ENCODE measurements at regions of chr1 and their contacts with region 1.

Region 1: GRCh38 chr1:199113265-199113869 is 474.5 kb downstream of the PTPRC start:
- DNase-seq: peak; percentile 85
- H3K4me3 ChIP-seq: no peak overlapping the region
- H3K27ac ChIP-seq: no peak overlapping the region
- H3K4me1 ChIP-seq: no peaks in the 10 kb centered on the region
- H3K27me3 ChIP-seq: no peaks in the 10 kb centered on the region
- CTCF ChIP-seq: peak; percentile 81 to 83
- POLR2A ChIP-seq: no peak

Region 2: DNA sequence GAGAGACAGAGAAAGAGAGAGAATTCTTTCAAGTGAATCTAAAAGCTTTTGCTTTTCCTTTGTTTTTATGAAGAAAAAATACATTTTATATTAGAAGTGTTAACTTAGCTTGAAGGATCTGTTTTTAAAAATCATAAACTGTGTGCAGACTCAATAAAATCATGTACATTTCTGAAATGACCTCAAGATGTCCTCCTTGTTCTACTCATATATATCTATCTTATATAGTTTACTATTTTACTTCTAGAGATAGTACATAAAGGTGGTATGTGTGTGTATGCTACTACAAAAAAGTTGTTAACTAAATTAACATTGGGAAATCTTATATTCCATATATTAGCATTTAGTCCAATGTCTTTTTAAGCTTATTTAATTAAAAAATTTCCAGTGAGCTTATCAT is 356.9 kb before region 1 on chr1:
- CTCF ChIA-PET with region 1: interaction called, 25 read pairs
- POLR2A ChIA-PET with region 1: no interaction called
- dilution Hi-C with region 1: no loop called
- intact Hi-C with region 1: no loop called
- DNase-seq: peak; percentile 27
- H3K4me3 ChIP-seq: no peak overlapping the region
- H3K27ac ChIP-seq: no peak overlapping the region
- H3K4me1 ChIP-seq: no peaks in the 10 kb centered on the region
- H3K27me3 ChIP-seq: no peaks in the 10 kb centered on the region
- CTCF ChIP-seq: no peak
- POLR2A ChIP-seq: no peak

Region 3: GRCh38 chr1:198892065-198892464 is 221.3 kb before region 1 on chr1:
- CTCF ChIA-PET with region 1: interaction called, 7 read pairs
- POLR2A ChIA-PET with region 1: no interaction called
- dilution Hi-C with region 1: no loop called
- intact Hi-C with region 1: loop called (anchors 5 kb)
- DNase-seq: peak; percentile 87
- H3K4me3 ChIP-seq: no peak overlapping the region
- H3K27ac ChIP-seq: peak overlapping the region; percentile 74
- H3K4me1 ChIP-seq: peaks cover 44% of the 10 kb centered on the region
- H3K27me3 ChIP-seq: no peaks in the 10 kb centered on the region
- CTCF ChIP-seq: no peak
- POLR2A ChIP-seq: no peak

Region 4: GRCh38 chr1:199123615-199124014 is 10.2 kb after region 1 on chr1:
- CTCF ChIA-PET with region 1: interaction called, 24 read pairs
- POLR2A ChIA-PET with region 1: no interaction called
- dilution Hi-C with region 1: no loop called
- intact Hi-C with region 1: no loop called
- DNase-seq: no peak
- H3K4me3 ChIP-seq: no peak overlapping the region
- H3K27ac ChIP-seq: no peak overlapping the region
- H3K4me1 ChIP-seq: no peaks in the 10 kb centered on the region
- H3K27me3 ChIP-seq: no peaks in the 10 kb centered on the region
- CTCF ChIP-seq: no peak
- POLR2A ChIP-seq: no peak

Region 5: DNA sequence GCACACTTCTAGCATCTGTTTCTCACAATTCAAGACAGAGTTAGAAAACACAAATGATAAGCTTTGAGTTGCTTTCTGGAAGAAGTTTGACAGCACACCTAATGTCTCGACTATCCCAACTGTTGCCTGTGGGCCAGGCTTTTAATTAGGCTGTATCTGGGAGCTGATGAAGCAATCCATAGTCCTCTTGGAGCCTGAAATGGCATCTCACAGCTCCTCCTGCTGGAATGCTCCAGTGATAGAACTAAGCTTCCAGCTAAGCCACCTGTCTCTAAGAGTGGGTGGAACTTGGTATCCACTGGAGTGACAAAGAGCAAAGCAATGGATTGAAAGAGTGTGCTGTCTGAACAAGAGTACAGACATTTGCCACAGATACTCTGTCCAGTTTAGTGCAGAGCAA is 308.8 kb after region 1 on chr1:
- CTCF ChIA-PET with region 1: interaction called, 25 read pairs
- POLR2A ChIA-PET with region 1: no interaction called
- dilution Hi-C with region 1: no loop called
- intact Hi-C with region 1: loop called (anchors 10 kb)
- DNase-seq: peak; percentile 53
- H3K4me3 ChIP-seq: no peak overlapping the region
- H3K27ac ChIP-seq: no peak overlapping the region
- H3K4me1 ChIP-seq: no peaks in the 10 kb centered on the region
- H3K27me3 ChIP-seq: no peaks in the 10 kb centered on the region
- CTCF ChIP-seq: peak in 1 of 2 donors; percentile 47
- POLR2A ChIP-seq: no peak

Region 6: GRCh38 chr1:199551967-199552565 is 438.7 kb after region 1 on chr1:
- CTCF ChIA-PET with region 1: interaction called, 4 read pairs
- POLR2A ChIA-PET with region 1: no interaction called
- dilution Hi-C with region 1: no loop called
- intact Hi-C with region 1: loop called (anchors 5 kb)
- DNase-seq: peak; percentile 77
- H3K4me3 ChIP-seq: no peak overlapping the region
- H3K27ac ChIP-seq: no peak overlapping the region
- H3K4me1 ChIP-seq: no peaks in the 10 kb centered on the region
- H3K27me3 ChIP-seq: no peaks in the 10 kb centered on the region
- CTCF ChIP-seq: peak; percentile 46 to 65
- POLR2A ChIP-seq: no peak